ENCODE measurements at regions of chr7 and their contacts with region 1.

Region 1: DNA sequence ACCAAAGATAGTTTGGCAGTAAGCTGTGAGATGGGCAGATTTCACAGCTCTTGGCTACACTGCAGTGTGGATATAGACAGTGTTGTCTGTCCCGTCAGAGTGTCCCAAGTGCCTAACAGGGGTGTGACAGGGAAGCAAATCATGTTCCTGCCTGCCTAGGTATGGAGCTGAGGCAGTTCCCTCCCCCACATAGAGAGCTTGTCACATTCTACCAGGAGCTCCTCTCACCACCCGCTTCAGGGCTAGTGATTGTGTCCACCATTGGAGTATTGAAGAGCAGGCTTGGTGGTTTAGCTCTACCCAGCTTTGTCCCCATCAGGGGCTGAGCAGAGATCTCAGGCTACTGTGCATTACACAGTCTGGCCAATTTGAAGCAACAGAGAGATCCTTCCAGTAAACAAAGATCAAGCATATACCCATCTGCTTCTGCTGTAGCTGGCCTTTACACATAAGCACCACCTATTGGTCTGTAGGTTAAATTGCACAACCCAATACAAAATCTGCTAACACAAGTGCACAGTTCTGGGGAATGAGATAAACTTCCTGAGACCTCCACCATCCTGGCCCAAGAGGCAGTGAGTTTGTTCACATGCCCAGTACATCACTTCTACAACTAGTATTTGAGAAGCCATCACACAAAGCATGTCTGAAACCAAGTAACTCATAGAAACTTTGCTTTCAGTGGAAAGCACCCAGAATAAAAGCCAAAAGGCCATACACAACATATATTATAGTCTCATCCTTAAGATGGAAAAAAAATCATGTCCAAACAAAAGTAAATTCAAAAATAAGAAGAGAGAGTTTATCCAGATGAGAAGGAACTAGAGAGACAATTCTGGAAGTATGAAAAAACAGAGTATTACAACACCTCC is 67.3 kb downstream of the GLCCI1 start:
- DNase-seq: peak; percentile 46
- H3K4me3 ChIP-seq: no peak overlapping the region
- H3K27ac ChIP-seq: no peak overlapping the region
- H3K4me1 ChIP-seq: no peaks in the 10 kb centered on the region
- H3K27me3 ChIP-seq: no peaks in the 10 kb centered on the region
- CTCF ChIP-seq: peak; percentile 33 to 46
- POLR2A ChIP-seq: no peak

Region 2: GRCh38 chr7:7595451-7595850 is 440.4 kb before region 1 on chr7:
- CTCF ChIA-PET with region 1: interaction called, 21 read pairs
- POLR2A ChIA-PET with region 1: no interaction called
- dilution Hi-C with region 1: no loop called
- intact Hi-C with region 1: loop called (anchors 2 kb)
- DNase-seq: peak; percentile 41
- H3K4me3 ChIP-seq: no peak overlapping the region
- H3K27ac ChIP-seq: no peak overlapping the region
- H3K4me1 ChIP-seq: no peaks in the 10 kb centered on the region
- H3K27me3 ChIP-seq: no peaks in the 10 kb centered on the region
- CTCF ChIP-seq: no peak
- POLR2A ChIP-seq: no peak

Region 3: DNA sequence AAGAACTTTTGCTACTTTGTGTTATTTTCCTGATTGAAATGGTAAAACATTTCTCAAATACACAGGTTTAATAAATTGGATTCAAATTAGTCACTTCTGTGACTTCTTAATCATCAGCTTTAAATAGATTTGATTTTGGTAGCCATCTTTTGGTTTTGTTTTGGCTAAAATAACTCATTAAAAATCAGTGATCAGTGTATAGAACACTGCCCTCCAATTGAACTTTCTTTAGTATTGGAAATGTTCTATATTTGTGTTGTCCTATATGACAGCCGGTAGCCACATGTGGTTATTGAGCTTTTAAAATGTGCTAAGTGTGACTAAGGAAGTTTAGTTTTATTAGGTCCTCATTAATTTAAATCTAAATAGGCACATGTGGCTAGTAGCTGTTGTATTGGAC is 16.9 kb before region 1 on chr7:
- CTCF ChIA-PET with region 1: interaction called, 22 read pairs
- POLR2A ChIA-PET with region 1: no interaction called
- dilution Hi-C with region 1: no loop called
- intact Hi-C with region 1: no loop called
- DNase-seq: no peak
- H3K4me3 ChIP-seq: no peak overlapping the region
- H3K27ac ChIP-seq: no peak overlapping the region
- H3K4me1 ChIP-seq: peaks cover 5% of the 10 kb centered on the region
- H3K27me3 ChIP-seq: no peaks in the 10 kb centered on the region
- CTCF ChIP-seq: no peak
- POLR2A ChIP-seq: no peak

Region 4: GRCh38 chr7:8739837-8740236 is 704.0 kb after region 1 on chr7:
- CTCF ChIA-PET with region 1: no interaction called
- POLR2A ChIA-PET with region 1: no interaction called
- dilution Hi-C with region 1: no loop called
- intact Hi-C with region 1: no loop called
- DNase-seq: no peak
- H3K4me3 ChIP-seq: no peak overlapping the region
- H3K27ac ChIP-seq: no peak overlapping the region
- H3K4me1 ChIP-seq: no peaks in the 10 kb centered on the region
- H3K27me3 ChIP-seq: no peaks in the 10 kb centered on the region
- CTCF ChIP-seq: no peak
- POLR2A ChIP-seq: no peak

Measured in endothelial cell of umbilical vein (primary cell).